CD8-positive, alpha-beta T cell (primary cell): ENCODE measurements at regions of chr9 and their contacts with region 1.

Region 1: GRCh38 chr9:36450110-36450732 is 50.2 kb upstream of the RNF38 start:
- DNase-seq: peak in 3 of 9 experiments; percentile 41 to 66 (median 56)
- ATAC-seq: no peak
- H3K4me3 ChIP-seq: no peak overlapping the region
- H3K4me3 Mint-ChIP-seq: no peak overlapping the region
- H3K27ac ChIP-seq: no peak overlapping the region
- H3K27ac Mint-ChIP-seq: no peak overlapping the region
- H3K4me1 ChIP-seq: peaks cover 14% of the 10 kb centered on the region
- H3K4me1 Mint-ChIP-seq: peaks cover 38% of the 10 kb centered on the region
- H3K27me3 ChIP-seq: no peaks in the 10 kb centered on the region
- H3K27me3 Mint-ChIP-seq: no peaks in the 10 kb centered on the region
- CTCF ChIP-seq: peak; percentile 75

Region 2: DNA sequence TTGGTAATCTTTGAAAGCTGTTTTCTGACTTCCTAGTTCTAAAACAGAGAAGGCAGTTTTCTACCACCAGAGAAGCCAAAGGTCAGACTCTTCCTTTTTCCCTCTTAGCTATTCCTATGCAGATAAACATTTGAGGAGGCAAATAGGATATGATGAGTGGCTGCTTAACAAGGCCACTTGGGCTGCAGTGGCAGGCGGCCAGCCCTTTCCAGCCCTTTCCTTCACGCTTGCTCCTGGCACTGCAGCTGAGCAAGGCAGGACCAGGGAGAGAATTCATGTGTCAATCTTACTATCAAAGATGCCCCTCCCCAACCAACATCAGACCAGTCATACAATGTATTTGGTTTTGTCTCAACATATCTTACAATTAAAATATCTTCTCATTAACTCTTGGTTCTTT is 13.3 kb before region 1 on chr9:
- CTCF ChIA-PET with region 1: interaction called, 18 read pairs
- POLR2A ChIA-PET with region 1: interaction called, 4 read pairs
- intact Hi-C with region 1: no loop called
- DNase-seq: no peak
- ATAC-seq: no peak
- H3K4me3 ChIP-seq: no peak overlapping the region
- H3K4me3 Mint-ChIP-seq: no peak overlapping the region
- H3K27ac ChIP-seq: no peak overlapping the region
- H3K27ac Mint-ChIP-seq: no peak overlapping the region
- H3K4me1 ChIP-seq: peaks cover 16% of the 10 kb centered on the region
- H3K4me1 Mint-ChIP-seq: peaks cover 41% of the 10 kb centered on the region
- H3K27me3 ChIP-seq: no peaks in the 10 kb centered on the region
- H3K27me3 Mint-ChIP-seq: no peaks in the 10 kb centered on the region
- CTCF ChIP-seq: no peak

Region 3: GRCh38 chr9:36470643-36471290 is 20.5 kb after region 1 on chr9:
- CTCF ChIA-PET with region 1: no interaction called
- POLR2A ChIA-PET with region 1: no interaction called
- intact Hi-C with region 1: no loop called
- DNase-seq: peak in 8 of 9 experiments; percentile 42 to 87 (median 64)
- ATAC-seq: peak; percentile 98
- H3K4me3 ChIP-seq: peak overlapping the region; percentile 43 to 45
- H3K4me3 Mint-ChIP-seq: peak overlapping the region; percentile 82
- H3K27ac ChIP-seq: peak overlapping the region; percentile 55 to 85
- H3K27ac Mint-ChIP-seq: peak overlapping the region; percentile 93
- H3K4me1 ChIP-seq: peaks cover 20% of the 10 kb centered on the region
- H3K4me1 Mint-ChIP-seq: peaks cover 42% of the 10 kb centered on the region
- H3K27me3 ChIP-seq: no peaks in the 10 kb centered on the region
- H3K27me3 Mint-ChIP-seq: no peaks in the 10 kb centered on the region
- CTCF ChIP-seq: no peak

Region 4: DNA sequence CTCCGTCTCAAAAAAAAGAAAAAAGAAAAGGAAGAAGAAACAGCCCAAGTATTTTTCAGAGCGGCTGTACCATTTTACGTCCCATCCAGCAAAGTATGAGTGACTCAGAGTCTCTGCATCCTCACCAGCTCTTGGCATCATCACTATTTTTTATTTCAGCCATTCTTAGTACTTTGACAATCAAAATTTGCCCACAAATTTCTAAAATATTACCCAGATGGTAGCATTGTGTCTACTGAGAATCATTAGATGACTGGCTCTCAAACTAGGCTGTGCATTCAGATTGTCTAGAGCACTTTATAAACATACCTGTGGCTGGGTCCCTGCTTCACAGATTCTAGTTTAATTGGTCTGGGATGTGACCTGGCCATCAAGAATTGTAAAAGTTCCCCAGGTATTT is 100.9 kb after region 1 on chr9:
- CTCF ChIA-PET with region 1: interaction called, 58 read pairs
- POLR2A ChIA-PET with region 1: no interaction called
- intact Hi-C with region 1: loop called (anchors 1 kb)
- DNase-seq: no peak
- ATAC-seq: no peak
- H3K4me3 ChIP-seq: no peak overlapping the region
- H3K4me3 Mint-ChIP-seq: no peak overlapping the region
- H3K27ac ChIP-seq: no peak overlapping the region
- H3K27ac Mint-ChIP-seq: no peak overlapping the region
- H3K4me1 ChIP-seq: no peaks in the 10 kb centered on the region
- H3K4me1 Mint-ChIP-seq: peaks cover 3% of the 10 kb centered on the region
- H3K27me3 ChIP-seq: no peaks in the 10 kb centered on the region
- H3K27me3 Mint-ChIP-seq: no peaks in the 10 kb centered on the region
- CTCF ChIP-seq: no peak

Region 5: GRCh38 chr9:37026113-37026930 is 576.1 kb after region 1 on chr9:
- CTCF ChIA-PET with region 1: no interaction called
- POLR2A ChIA-PET with region 1: no interaction called
- intact Hi-C with region 1: no loop called
- DNase-seq: no peak
- ATAC-seq: no peak
- H3K4me3 ChIP-seq: peak overlapping the region; percentile 3 to 49
- H3K4me3 Mint-ChIP-seq: peak overlapping the region; percentile 75
- H3K27ac ChIP-seq: no peak overlapping the region
- H3K27ac Mint-ChIP-seq: no peak overlapping the region
- H3K4me1 ChIP-seq: peaks cover 54% of the 10 kb centered on the region
- H3K4me1 Mint-ChIP-seq: peaks cover 45% of the 10 kb centered on the region
- H3K27me3 ChIP-seq: peaks cover 68 to 71% of the 10 kb centered on the region in 2 experiments
- H3K27me3 Mint-ChIP-seq: peaks cover 74% of the 10 kb centered on the region
- CTCF ChIP-seq: no peak